H1 (cell line): ENCODE measurements at regions of chr12 and their contacts with region 1.

Region 1: GRCh38 chr12:113048716-113049127 is 7.8 kb upstream of the DTX1 start:
- DNase-seq: no peak
- H3K4me3 ChIP-seq: no peak overlapping the region
- H3K27ac ChIP-seq: no peak overlapping the region
- H3K4me1 ChIP-seq: no peaks in the 10 kb centered on the region; a peak in 2 of 7 replicates
- H3K27me3 ChIP-seq: no peaks in the 10 kb centered on the region; a peak in 2 of 7 replicates
- CTCF ChIP-seq: peak; percentile 38 to 86 (median 68)
- EP300 ChIP-seq: no peak
- POLR2A ChIP-seq: no peak
- RAD21 ChIP-seq: peak; percentile 87 to 91

Region 2: GRCh38 chr12:113005754-113006153 is 43.0 kb before region 1 on chr12:
- CTCF ChIA-PET with region 1: interaction called, 10 read pairs
- POLR2A ChIA-PET with region 1: no interaction called
- DNase-seq: no peak
- H3K4me3 ChIP-seq: no peak overlapping the region
- H3K27ac ChIP-seq: no peak overlapping the region
- H3K4me1 ChIP-seq: no peaks in the 10 kb centered on the region
- H3K27me3 ChIP-seq: peaks cover 0 to 7% (median 0%) of the 10 kb centered on the region in 4 experiments; a peak in 1 of 7 replicates
- CTCF ChIP-seq: peak in 2 of 3 experiments; percentile 48 to 55; a peak in 2 of 4 replicates
- EP300 ChIP-seq: no peak
- POLR2A ChIP-seq: no peak
- RAD21 ChIP-seq: peak; percentile 28 to 39; a peak in 3 of 4 replicates

Region 3: DNA sequence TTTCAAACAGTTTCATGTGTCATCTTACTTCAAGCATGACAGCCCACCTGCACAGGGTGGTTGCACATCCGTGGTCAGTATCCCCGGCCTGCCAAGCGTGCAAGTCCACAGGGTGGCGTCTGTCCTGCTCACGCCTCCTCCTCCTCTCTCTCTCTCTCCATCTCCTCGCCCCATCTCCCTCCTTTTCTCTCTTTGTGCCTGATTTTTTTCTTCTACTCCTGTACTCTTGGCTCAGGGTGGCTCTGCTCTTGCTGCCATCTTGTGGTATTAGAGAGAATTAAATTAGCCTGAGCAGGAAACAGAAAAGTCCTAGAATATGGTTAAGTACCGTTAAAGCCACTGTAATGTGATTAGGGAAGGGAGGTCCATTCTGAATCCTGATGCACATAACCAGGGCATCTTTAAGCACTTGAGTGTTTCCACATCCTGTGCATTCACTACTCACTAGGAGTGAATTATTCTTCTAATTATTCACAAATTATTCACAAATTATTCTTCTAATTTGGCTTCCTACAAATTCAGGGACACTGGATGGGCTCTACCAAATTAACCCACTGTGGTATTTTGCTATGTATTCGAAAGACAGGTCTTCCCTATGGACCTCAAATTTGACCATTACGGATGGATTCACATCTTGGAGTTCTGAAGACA is 17.7 kb before region 1 on chr12:
- CTCF ChIA-PET with region 1: interaction called, 16 read pairs
- POLR2A ChIA-PET with region 1: no interaction called
- DNase-seq: peak; percentile 34 to 51
- H3K4me3 ChIP-seq: no peak overlapping the region
- H3K27ac ChIP-seq: no peak overlapping the region
- H3K4me1 ChIP-seq: peaks cover 0 to 4% (median 2%) of the 10 kb centered on the region in 4 experiments; a peak in 4 of 7 replicates
- H3K27me3 ChIP-seq: no peaks in the 10 kb centered on the region
- CTCF ChIP-seq: peak; percentile 54 to 84 (median 65)
- EP300 ChIP-seq: no peak
- POLR2A ChIP-seq: no peak
- RAD21 ChIP-seq: peak; percentile 67 to 77

Region 4: DNA sequence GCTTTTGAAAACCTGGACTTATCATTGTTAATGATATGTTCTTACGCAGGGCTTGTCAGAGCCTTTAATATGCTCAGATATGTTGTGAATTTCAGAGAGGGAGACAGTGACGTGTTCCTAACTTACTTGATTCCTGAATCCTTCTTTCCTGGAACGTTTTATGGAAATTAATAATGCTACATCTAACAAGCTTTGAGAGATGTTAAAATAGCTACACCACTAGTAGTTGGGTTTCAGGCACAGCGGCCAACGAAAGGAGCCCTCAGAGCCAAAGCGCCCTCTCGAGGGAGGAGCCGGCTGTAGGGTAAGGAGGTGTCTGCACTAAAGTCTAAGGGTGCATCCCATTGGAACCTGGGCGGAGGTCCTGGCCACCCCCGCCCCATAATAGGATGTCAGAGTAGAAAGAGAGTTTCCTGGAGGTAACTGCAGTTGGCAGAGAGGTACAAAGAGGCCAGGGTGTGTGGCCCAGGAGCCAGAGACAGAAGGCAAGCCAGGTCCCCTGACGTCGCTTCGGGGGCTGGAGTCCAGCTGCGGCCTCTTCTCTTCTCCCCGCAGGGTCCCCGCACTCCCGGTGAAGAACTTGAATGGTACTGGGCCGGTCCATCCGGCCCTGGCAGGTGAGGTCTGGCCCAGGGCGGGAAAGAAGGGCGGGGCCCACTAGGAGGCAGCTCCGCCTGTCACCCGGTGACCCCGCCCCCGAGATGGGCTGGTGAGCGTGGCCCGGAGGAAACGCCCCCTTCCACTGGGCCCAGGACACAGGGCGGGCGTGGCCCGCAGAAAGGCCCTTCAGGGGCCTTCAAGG is 44.1 kb after region 1 on chr12:
- CTCF ChIA-PET with region 1: interaction called, 139 read pairs
- POLR2A ChIA-PET with region 1: no interaction called
- DNase-seq: peak in 1 of 2 experiments; percentile 92
- H3K4me3 ChIP-seq: peak overlapping the region; percentile 39 to 64 (median 44)
- H3K27ac ChIP-seq: no peak overlapping the region
- H3K4me1 ChIP-seq: peaks cover 0 to 8% (median 3%) of the 10 kb centered on the region in 4 experiments; a peak in 5 of 7 replicates
- H3K27me3 ChIP-seq: no peaks in the 10 kb centered on the region
- CTCF ChIP-seq: peak; percentile 34 to 58 (median 57); a peak in 3 of 4 replicates
- EP300 ChIP-seq: no peak
- POLR2A ChIP-seq: 0 out of 3 replicates have a peak, but pooled peaks of 1 of the 2 experiments have one; percentile 28
- RAD21 ChIP-seq: peak; percentile 41 to 56

Region 5: GRCh38 chr12:113103756-113104450 is 55.2 kb after region 1 on chr12:
- CTCF ChIA-PET with region 1: interaction called, 60 read pairs
- POLR2A ChIA-PET with region 1: no interaction called
- DNase-seq: peak; percentile 70 to 89
- H3K4me3 ChIP-seq: peak overlapping the region; percentile 35 to 65 (median 46)
- H3K27ac ChIP-seq: peak overlapping the region; percentile 45; the same call in 1 of the 2 replicates
- H3K4me1 ChIP-seq: peaks cover 0 to 3% (median 1%) of the 10 kb centered on the region in 4 experiments; a peak in 2 of 7 replicates
- H3K27me3 ChIP-seq: 0 out of 7 replicates have a peak, but pooled peaks cover 0 to 2% (median 0%) of the 10 kb centered on the region in 4 experiments
- CTCF ChIP-seq: peak; percentile 13 to 36 (median 26)
- EP300 ChIP-seq: no peak
- POLR2A ChIP-seq: peak in 1 of 2 experiments; percentile 65; a peak in 1 of 3 replicates
- RAD21 ChIP-seq: 0 out of 4 replicates have a peak, but pooled peaks of 1 of the 2 experiments have one; percentile 7

Region 6: GRCh38 chr12:113152835-113153814 is 104.4 kb after region 1 on chr12:
- CTCF ChIA-PET with region 1: interaction called, 36 read pairs
- POLR2A ChIA-PET with region 1: no interaction called
- DNase-seq: peak; percentile 51 to 86
- H3K4me3 ChIP-seq: peak overlapping the region; percentile 29 to 59 (median 50)
- H3K27ac ChIP-seq: no peak overlapping the region
- H3K4me1 ChIP-seq: peaks cover 7 to 23% (median 19%) of the 10 kb centered on the region in 4 experiments
- H3K27me3 ChIP-seq: peaks cover 1 to 34% (median 26%) of the 10 kb centered on the region in 4 experiments
- CTCF ChIP-seq: peak; percentile 53 to 61 (median 60)
- EP300 ChIP-seq: no peak
- POLR2A ChIP-seq: no peak
- RAD21 ChIP-seq: peak; percentile 64 to 74